IMR-90 (cell line): ENCODE measurements at regions of chr5 and their contacts with region 1.

Region 1: DNA sequence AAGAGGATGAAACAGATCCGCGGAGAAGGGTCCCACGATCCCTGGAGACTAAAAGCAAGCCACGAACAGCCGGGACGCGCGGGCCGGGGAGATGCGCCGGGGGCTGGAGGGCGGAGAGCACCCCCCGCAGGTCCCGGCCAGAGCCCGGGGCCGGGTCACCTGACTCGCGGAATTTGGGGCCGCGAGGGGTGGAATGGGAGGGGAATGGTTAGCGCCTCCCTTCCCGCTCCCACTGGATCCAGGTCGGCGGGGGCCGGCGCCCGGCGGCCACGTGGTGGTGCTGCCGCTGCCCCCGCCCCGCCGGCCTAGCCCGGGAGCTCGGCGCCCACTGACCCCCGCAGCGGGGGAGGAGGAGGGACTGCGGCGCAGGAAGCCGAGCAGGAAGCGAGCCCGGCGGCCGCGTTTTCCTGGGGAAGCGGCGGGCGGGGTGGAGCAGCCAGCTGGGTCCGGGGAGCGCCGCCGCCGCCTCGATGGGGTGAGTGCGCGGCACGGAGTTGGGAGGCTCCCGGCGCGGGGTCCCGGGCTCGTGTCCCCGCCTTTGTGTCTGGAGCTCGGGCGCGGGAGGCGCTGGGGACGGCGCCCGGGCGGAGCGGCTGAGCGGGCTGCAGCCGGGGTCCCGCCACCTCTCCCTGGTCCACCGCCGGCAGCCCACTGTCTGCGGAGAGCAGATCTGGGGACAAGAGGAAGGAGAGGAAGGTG is at the start of gene RAI14:
- DNase-seq: peak; percentile 85
- ATAC-seq: peak; percentile 78
- H3K4me3 ChIP-seq: peak within 1 kb of the TSS; percentile 99
- H3K27ac ChIP-seq: peak within 1 kb of the TSS; percentile 100
- H3K4me1 ChIP-seq: peaks cover 14% of the 10 kb centered on the region
- H3K27me3 ChIP-seq: no peaks in the 10 kb centered on the region
- CTCF ChIP-seq: peak; percentile 21; the same call in 1 of the 2 replicates
- POLR2A ChIP-seq: peak; percentile 72
- RAD21 ChIP-seq: peak; percentile 12; the same call in 1 of the 2 replicates
- total RNA-seq, gene RAI14: 267 and 361 TPM in 2 replicates

Region 2: DNA sequence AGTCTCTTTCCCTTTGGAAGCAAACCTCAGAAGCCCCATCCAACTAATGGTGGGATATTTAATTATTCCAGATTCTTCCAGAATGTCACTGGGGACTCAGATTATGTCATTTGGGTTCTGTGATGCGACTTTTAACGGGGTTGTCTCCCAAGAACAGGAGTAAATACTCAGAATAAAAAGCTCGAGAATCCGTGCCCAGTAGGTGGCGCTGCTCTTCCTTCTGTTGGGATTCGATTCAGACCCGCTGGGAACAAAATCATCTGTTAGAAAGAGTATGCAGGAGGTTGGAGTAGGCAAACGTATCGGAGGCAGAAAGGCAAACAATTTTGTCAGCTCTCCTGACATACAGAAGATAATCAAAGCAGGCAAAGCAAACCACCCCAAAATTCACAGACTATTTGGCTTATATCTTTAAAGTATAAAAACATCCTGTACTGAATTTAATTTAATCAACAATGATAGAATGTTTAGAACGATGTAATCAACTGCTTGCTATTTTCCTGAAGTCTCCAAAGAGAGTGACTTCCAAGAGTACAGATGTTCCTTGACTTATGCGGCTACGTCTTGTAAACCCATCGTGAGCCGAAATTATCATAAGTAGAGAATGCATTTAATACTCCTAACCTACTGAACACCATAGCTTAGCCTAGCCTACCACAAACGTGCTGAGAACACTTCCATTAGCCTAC is 169.8 kb before region 1 on chr5:
- CTCF ChIA-PET with region 1: interaction called, 5 read pairs
- POLR2A ChIA-PET with region 1: interaction called, 3 read pairs
- dilution Hi-C with region 1: no loop called
- in situ Hi-C with region 1: no loop called
- intact Hi-C with region 1: loop called (anchors 1 kb)
- DNase-seq: peak; percentile 88
- ATAC-seq: peak; percentile 54
- H3K4me3 ChIP-seq: no peak overlapping the region
- H3K27ac ChIP-seq: peak overlapping the region; percentile 70; the same call in 1 of the 2 replicates
- H3K4me1 ChIP-seq: peaks cover 31% of the 10 kb centered on the region
- H3K27me3 ChIP-seq: no peaks in the 10 kb centered on the region
- CTCF ChIP-seq: peak; percentile 90
- POLR2A ChIP-seq: peak; percentile 27; the same call in 1 of the 2 replicates
- RAD21 ChIP-seq: peak; percentile 93

Region 3: GRCh38 chr5:34533582-34534522 is 122.3 kb before region 1 on chr5:
- CTCF ChIA-PET with region 1: no interaction called
- POLR2A ChIA-PET with region 1: interaction called, 5 read pairs
- dilution Hi-C with region 1: no loop called
- in situ Hi-C with region 1: loop called (anchors 5 kb)
- intact Hi-C with region 1: loop called (anchors 1 kb)
- DNase-seq: peak; percentile 97
- ATAC-seq: peak; percentile 61
- H3K4me3 ChIP-seq: no peak overlapping the region
- H3K27ac ChIP-seq: peak overlapping the region; percentile 98
- H3K4me1 ChIP-seq: peaks cover 36% of the 10 kb centered on the region
- H3K27me3 ChIP-seq: no peaks in the 10 kb centered on the region
- CTCF ChIP-seq: no peak
- POLR2A ChIP-seq: no peak
- RAD21 ChIP-seq: no peak

Region 4: GRCh38 chr5:34608859-34609648 is 47.1 kb before region 1 on chr5:
- CTCF ChIA-PET with region 1: interaction called, 5 read pairs
- POLR2A ChIA-PET with region 1: no interaction called
- dilution Hi-C with region 1: no loop called
- in situ Hi-C with region 1: no loop called
- intact Hi-C with region 1: loop called (anchors 1 kb)
- DNase-seq: peak; percentile 93
- ATAC-seq: peak; percentile 82
- H3K4me3 ChIP-seq: no peak overlapping the region
- H3K27ac ChIP-seq: peak overlapping the region; percentile 97
- H3K4me1 ChIP-seq: peaks cover 10% of the 10 kb centered on the region
- H3K27me3 ChIP-seq: no peaks in the 10 kb centered on the region
- CTCF ChIP-seq: no peak
- POLR2A ChIP-seq: no peak; the same call in 1 of the 2 replicates
- RAD21 ChIP-seq: no peak

Region 5: DNA sequence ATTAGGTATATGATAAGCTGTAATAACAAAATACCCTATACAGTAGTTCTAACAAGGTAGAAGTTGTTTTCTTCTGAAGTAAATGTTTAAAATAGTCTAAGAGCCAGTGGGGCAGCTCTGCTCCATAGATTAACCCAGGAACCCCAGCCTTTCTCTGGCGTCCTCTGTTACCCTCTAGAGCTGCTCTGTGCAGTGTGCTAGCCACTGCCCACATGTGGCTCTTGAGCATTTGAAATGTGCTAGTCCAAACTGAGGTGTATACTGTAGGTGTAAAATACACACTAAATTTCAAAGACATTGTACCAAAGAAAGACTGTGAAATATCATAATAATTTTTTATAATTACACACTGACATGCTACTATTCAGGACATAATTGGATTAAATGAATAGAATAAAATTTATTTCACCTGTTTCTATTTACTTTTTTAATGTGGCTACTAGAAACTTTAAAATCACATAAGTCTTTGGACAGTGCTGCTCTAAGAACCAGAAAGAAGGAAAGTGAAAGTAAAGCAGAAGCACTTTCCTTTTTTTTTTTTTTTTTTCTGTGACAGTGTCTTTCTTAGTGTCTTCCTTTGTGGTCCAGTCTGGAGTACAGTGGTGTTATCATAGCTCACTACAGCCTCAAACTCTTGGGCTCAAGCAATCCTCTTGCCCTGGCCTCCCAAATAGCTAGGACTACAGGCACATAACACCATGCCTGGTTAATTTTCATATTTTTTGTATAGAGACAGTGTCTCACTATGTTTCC is 39.3 kb after region 1 on chr5:
- CTCF ChIA-PET with region 1: no interaction called
- POLR2A ChIA-PET with region 1: no interaction called
- dilution Hi-C with region 1: no loop called
- in situ Hi-C with region 1: no loop called
- intact Hi-C with region 1: loop called (anchors 2 kb)
- DNase-seq: no peak
- ATAC-seq: peak; percentile 24; the same call in 1 of the 2 replicates
- H3K4me3 ChIP-seq: no peak overlapping the region
- H3K27ac ChIP-seq: peak overlapping the region; percentile 82; the same call in 1 of the 2 replicates
- H3K4me1 ChIP-seq: peaks cover 27% of the 10 kb centered on the region
- H3K27me3 ChIP-seq: no peaks in the 10 kb centered on the region
- CTCF ChIP-seq: no peak
- POLR2A ChIP-seq: no peak
- RAD21 ChIP-seq: no peak

Region 6: DNA sequence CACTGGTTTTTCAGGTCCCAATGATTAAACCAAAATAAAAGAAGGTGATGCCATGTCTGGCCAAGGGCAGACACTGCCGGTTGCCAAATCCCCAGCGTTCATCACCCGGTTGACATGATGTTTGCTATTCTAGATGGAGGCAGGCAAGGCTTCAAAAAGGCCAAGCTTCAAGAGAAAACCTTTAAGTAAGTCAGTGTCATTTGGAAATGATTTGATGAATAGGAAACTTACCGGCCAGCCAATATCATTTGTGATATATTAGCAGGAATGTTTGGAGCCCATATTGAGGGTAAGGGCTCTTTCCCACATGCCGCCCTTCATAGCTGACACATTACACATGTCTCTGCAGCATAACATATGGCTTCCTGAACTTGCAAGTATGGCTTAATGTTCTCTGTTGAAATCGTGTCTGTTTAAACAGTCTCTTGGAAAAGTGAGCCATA is 93.3 kb after region 1 on chr5:
- CTCF ChIA-PET with region 1: no interaction called
- POLR2A ChIA-PET with region 1: no interaction called
- dilution Hi-C with region 1: no loop called
- in situ Hi-C with region 1: no loop called
- intact Hi-C with region 1: loop called (anchors 5 kb)
- DNase-seq: peak; percentile 89
- ATAC-seq: peak; percentile 77
- H3K4me3 ChIP-seq: no peak overlapping the region
- H3K27ac ChIP-seq: peak overlapping the region; percentile 36
- H3K4me1 ChIP-seq: peaks cover 14% of the 10 kb centered on the region
- H3K27me3 ChIP-seq: no peaks in the 10 kb centered on the region
- CTCF ChIP-seq: no peak
- POLR2A ChIP-seq: no peak
- RAD21 ChIP-seq: no peak

Region 7: GRCh38 chr5:34898258-34898895 is 242.2 kb after region 1 on chr5:
- CTCF ChIA-PET with region 1: interaction called, 3 read pairs
- POLR2A ChIA-PET with region 1: no interaction called
- dilution Hi-C with region 1: no loop called
- in situ Hi-C with region 1: no loop called
- intact Hi-C with region 1: loop called (anchors 2 kb)
- DNase-seq: peak; percentile 77
- ATAC-seq: peak; percentile 90
- H3K4me3 ChIP-seq: no peak overlapping the region
- H3K27ac ChIP-seq: no peak overlapping the region
- H3K4me1 ChIP-seq: no peaks in the 10 kb centered on the region
- H3K27me3 ChIP-seq: no peaks in the 10 kb centered on the region
- CTCF ChIP-seq: peak; percentile 84
- POLR2A ChIP-seq: 0 out of 2 replicates have a peak, but pooled peaks have one; percentile 38
- RAD21 ChIP-seq: peak; percentile 92